OCI-LY7 (cell line): ENCODE measurements at regions of chr5 and their contacts with region 1.

Region 1: DNA sequence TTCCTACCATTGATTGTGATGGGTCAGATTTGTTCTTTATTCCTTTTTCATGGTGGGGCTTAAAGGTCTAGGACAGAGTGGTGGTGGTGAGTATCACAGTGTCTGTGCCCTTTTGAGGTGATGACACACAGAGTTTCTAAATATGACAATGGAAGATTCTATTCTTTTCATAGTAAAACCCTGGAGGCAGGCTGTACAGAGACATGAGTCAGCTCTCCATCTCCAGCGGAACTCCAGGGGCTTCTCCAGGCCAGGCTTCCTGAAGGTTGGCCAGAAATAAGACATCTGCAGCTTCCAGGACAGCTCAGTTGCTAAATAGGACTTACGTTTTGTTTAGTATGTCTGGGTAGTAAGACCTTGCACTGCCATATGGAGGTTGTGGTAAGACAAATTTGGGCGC is 229.5 kb downstream of the CD180 start:
- DNase-seq: no peak
- H3K4me3 ChIP-seq: no peak overlapping the region
- H3K27ac ChIP-seq: no peak overlapping the region
- H3K4me1 ChIP-seq: no peaks in the 10 kb centered on the region
- CTCF ChIP-seq: no peak

Region 2: GRCh38 chr5:66891183-66891925 is 75.7 kb before region 1 on chr5:
- CTCF ChIA-PET with region 1: no interaction called
- POLR2A ChIA-PET with region 1: no interaction called
- intact Hi-C with region 1: no loop called
- DNase-seq: no peak
- H3K4me3 ChIP-seq: no peak overlapping the region
- H3K27ac ChIP-seq: no peak overlapping the region
- H3K4me1 ChIP-seq: no peaks in the 10 kb centered on the region
- CTCF ChIP-seq: no peak

Region 3: DNA sequence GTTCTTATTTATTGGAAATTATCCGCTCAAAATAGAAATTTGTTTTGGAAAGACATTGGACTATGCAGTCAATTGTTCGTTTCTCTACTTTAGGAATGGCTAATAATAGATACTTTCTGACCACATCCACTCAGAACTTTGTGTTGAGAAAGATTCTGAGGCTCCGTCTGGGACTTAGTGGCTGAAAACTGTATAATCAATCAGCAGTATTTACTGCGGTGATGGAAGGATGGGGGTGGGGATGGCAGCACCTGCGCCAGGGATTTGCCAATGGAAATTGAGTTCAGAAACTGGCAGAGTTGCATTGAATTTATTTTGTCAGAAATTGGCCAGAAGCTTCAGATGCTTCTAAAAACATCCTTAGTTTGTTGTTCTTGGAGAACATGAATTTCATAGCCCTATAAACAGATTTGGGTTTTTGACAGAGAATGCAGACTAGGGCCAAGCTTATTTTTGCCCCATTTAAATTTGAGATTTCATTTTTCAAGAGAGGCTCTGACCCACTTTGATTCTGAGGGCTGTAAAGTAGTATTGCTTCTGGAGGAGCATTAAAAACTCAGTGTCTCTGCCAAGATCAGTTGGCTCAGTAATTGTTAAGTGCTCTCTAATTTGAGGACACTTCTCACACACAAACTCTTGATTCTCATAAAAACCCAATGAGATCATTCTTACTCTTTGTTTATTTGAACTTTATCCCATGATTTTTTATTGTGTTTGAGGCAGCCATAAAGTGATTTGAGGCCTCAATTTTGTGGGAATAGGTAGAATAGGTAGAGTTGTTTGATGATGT is 14.4 kb after region 1 on chr5:
- CTCF ChIA-PET with region 1: no interaction called
- POLR2A ChIA-PET with region 1: interaction called, 10 read pairs
- intact Hi-C with region 1: no loop called
- DNase-seq: no peak
- H3K4me3 ChIP-seq: no peak overlapping the region
- H3K27ac ChIP-seq: no peak overlapping the region
- H3K4me1 ChIP-seq: no peaks in the 10 kb centered on the region
- CTCF ChIP-seq: no peak

Region 4: GRCh38 chr5:66994814-66995213 is 27.7 kb after region 1 on chr5:
- CTCF ChIA-PET with region 1: no interaction called
- POLR2A ChIA-PET with region 1: no interaction called
- intact Hi-C with region 1: no loop called
- DNase-seq: no peak
- H3K4me3 ChIP-seq: no peak overlapping the region
- H3K27ac ChIP-seq: no peak overlapping the region
- H3K4me1 ChIP-seq: no peaks in the 10 kb centered on the region
- CTCF ChIP-seq: no peak